A673 (cell line): ENCODE measurements at regions of chr10 and their contacts with region 1.

Region 1: GRCh38 chr10:97407211-97407951 is 6.2 kb upstream of the RRP12 start:
- DNase-seq: peak; percentile 89
- H3K4me3 ChIP-seq: peak overlapping the region; percentile 20
- H3K27ac ChIP-seq: no peak overlapping the region
- H3K4me1 ChIP-seq: no peaks in the 10 kb centered on the region
- H3K27me3 ChIP-seq: no peaks in the 10 kb centered on the region
- CTCF ChIP-seq: peak; percentile 82

Region 2: DNA sequence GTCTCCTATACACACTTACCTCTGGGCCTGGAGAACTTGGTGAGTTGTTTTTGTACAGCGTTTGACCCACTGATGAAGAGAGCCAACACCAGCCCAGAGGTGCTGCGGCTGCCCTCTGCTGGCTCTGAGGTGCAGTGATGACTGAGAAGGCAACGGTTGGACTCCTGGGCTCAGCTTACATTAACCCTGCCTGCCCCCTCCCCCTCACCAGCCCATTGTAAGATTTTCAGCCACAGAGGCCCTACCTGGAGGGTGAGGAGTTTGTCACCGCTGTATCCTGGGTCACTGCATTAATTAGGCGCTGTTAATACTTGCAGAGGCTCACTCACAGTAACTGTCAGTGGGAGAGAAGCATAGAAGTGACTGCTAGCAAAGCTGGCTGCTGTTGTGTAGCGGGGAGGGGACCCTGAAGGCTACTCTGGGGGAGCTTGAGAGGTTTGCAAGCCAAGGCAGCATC is 146.2 kb after region 1 on chr10:
- CTCF ChIA-PET with region 1: interaction called, 3 read pairs
- POLR2A ChIA-PET with region 1: no interaction called
- intact Hi-C with region 1: loop called (anchors 1 kb)
- DNase-seq: peak; percentile 70
- H3K4me3 ChIP-seq: no peak overlapping the region
- H3K27ac ChIP-seq: no peak overlapping the region
- H3K4me1 ChIP-seq: no peaks in the 10 kb centered on the region
- H3K27me3 ChIP-seq: no peaks in the 10 kb centered on the region
- CTCF ChIP-seq: peak; percentile 90

Region 3: DNA sequence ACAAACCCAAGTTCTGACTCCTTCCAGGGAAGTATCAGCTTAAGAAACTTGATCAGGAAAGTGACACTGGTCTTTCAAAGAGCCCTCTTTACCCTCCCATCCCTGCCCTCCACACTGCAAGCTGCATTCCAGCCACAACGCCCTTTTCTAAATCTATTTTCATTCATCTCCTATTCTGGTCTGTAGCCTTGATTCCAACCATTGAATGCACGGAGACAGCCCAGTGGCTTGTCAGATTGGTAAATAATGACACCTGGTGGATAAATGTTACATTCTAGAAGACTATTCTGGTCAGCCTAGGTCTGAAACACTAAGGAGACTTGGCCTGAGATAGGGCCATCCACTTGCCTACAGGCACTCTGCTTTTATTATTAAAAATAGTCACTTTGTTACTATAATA is 205.0 kb after region 1 on chr10:
- CTCF ChIA-PET with region 1: no interaction called
- POLR2A ChIA-PET with region 1: no interaction called
- intact Hi-C with region 1: loop called (anchors 2 kb)
- DNase-seq: peak; percentile 25
- H3K4me3 ChIP-seq: no peak overlapping the region
- H3K27ac ChIP-seq: no peak overlapping the region
- H3K4me1 ChIP-seq: no peaks in the 10 kb centered on the region
- H3K27me3 ChIP-seq: no peaks in the 10 kb centered on the region
- CTCF ChIP-seq: 0 out of 2 replicates have a peak, but pooled peaks have one; percentile 27